ENCODE measurements at regions of chr12 and their contacts with region 1.

Region 1: DNA sequence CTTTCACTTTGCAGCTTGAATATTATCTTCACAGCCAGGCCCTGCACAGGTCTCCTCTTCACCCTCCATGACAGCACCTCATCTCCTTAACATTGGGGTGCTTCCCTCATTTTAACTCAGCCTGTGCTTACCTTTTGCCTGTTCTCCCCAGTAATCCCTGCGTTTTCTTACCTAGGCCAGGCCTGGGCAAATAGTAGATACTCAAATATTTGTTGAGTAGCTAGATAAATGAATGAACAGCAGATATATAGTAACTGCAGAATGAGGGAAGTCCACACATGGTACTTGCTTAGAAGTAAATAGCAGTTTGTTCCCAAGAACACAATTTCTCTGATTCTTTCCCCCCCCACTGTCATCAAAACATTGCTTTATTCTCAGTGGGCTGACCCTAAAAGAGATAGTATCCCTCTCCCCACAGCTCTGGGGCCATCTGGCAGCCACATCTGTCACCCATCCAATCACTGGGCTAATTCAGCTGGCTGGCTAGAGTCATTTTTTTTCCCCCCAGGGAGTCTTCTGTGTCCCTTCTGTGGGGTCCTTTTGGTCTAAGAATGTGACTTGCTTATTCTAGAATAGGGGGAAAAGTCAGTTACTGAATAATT is 43.2 kb downstream of the APPL2 start:
- DNase-seq: no peak
- ATAC-seq: no peak
- H3K4me3 ChIP-seq: no peak overlapping the region
- H3K27ac ChIP-seq: no peak overlapping the region
- H3K4me1 ChIP-seq: no peaks in the 10 kb centered on the region
- H3K27me3 ChIP-seq: no peaks in the 10 kb centered on the region
- CTCF ChIP-seq: no peak
- POLR2A ChIP-seq: no peak

Region 2: GRCh38 chr12:105164068-105164467 is 28.7 kb before region 1 on chr12:
- intact Hi-C with region 1: loop called in 1 of 10 experiments (anchors 1 kb)
- DNase-seq: no peak
- ATAC-seq: no peak
- H3K4me3 ChIP-seq: no peak overlapping the region
- H3K27ac ChIP-seq: no peak overlapping the region
- H3K4me1 ChIP-seq: no peaks in the 10 kb centered on the region
- H3K27me3 ChIP-seq: no peaks in the 10 kb centered on the region
- CTCF ChIP-seq: no peak
- POLR2A ChIP-seq: no peak